ENCODE measurements at regions of chr22 and their contacts with region 1.

Region 1: DNA sequence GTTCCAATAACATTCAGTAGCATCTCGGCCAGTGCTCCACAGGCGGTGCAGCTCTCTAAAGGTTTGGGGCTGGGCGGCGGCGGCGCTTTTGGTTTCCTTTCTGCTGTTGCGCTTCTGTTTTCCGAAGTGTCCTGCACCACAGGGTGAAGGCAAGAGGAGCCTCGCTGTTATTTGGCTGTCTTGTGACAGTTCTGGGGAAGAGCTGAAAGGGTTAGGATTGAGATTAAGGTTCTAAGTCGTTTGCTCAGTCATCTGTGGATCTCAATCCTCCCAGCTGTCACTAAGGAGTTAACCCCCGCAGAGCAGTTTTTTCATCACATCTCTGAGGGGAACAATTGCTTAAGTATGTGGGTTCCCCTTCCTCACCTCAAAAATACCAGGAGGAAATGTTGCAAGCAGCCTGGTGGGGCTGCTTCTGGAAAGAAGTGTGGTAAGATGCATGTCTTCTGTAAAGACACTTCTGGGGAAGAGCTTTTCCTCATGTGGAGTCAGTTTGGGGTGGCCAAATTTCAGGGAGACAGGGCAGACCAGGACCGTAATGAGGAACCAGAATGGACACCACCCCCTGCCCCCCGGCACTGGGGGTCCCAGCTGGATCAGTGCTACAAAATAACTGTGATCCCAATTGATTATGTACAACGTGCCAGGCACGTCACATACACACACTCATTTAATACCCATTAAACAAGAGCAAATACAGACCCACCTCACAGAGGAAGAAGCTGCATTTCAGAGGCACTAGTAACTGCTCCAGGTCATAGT is 14.2 kb downstream of the TMEM121B start:
- DNase-seq: peak in 3 of 10 donors; percentile 43 to 58 (median 47)
- ATAC-seq: peak; percentile 83 to 84
- H3K4me3 Mint-ChIP-seq: peak overlapping the region; percentile 70 to 89 (median 86)
- H3K27ac Mint-ChIP-seq: peak overlapping the region; percentile 81 to 95 (median 92)
- H3K4me1 Mint-ChIP-seq: peaks cover 37 to 77% (median 58%) of the 10 kb centered on the region in 4 donors
- H3K27me3 Mint-ChIP-seq: no peaks in the 10 kb centered on the region

Region 2: GRCh38 chr22:16989915-16990314 is 117.1 kb before region 1 on chr22:
- POLR2A ChIA-PET with region 1: no interaction called
- DNase-seq: no peak
- ATAC-seq: no peak
- H3K4me3 Mint-ChIP-seq: no peak overlapping the region
- H3K27ac Mint-ChIP-seq: no peak overlapping the region
- H3K4me1 Mint-ChIP-seq: peaks cover 0 to 14% (median 1%) of the 10 kb centered on the region in 4 donors
- H3K27me3 Mint-ChIP-seq: peaks cover 3 to 21% (median 9%) of the 10 kb centered on the region in 5 donors

Region 3: GRCh38 chr22:17009640-17010291 is 97.2 kb before region 1 on chr22:
- POLR2A ChIA-PET with region 1: no interaction called
- DNase-seq: no peak
- ATAC-seq: no peak
- H3K4me3 Mint-ChIP-seq: no peak overlapping the region
- H3K27ac Mint-ChIP-seq: no peak overlapping the region
- H3K4me1 Mint-ChIP-seq: no peaks in the 10 kb centered on the region
- H3K27me3 Mint-ChIP-seq: peaks cover 28 to 79% (median 51%) of the 10 kb centered on the region in 5 donors

Region 4: DNA sequence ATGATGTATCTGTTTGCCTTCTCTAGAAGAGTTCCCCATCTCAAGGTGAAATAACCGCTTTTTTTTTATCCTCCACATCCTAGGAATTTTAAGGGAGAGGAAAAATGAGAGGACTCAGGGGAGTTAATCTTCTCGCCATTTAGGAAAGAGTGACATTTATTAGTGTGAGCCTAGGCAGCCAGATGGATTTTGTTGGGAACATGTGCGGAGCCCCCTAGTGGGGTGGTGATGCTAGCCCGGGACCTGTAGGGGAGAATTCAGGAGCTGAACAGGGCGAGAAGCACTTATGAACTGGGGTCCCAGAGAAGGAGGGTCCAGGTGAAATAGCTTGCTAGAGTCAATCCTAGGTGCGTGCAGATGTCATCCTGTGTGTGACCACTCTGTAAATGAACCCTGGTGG is 11.4 kb before region 1 on chr22:
- POLR2A ChIA-PET with region 1: interaction called, 67 read pairs
- DNase-seq: peak in 1 of 10 donors; percentile 23
- ATAC-seq: no peak
- H3K4me3 Mint-ChIP-seq: peak overlapping the region in 4 of 10 donors; percentile 33 to 50 (median 36)
- H3K27ac Mint-ChIP-seq: peak overlapping the region in 6 of 10 donors; percentile 23 to 83 (median 66)
- H3K4me1 Mint-ChIP-seq: peaks cover 46 to 97% (median 92%) of the 10 kb centered on the region in 4 donors
- H3K27me3 Mint-ChIP-seq: no peaks in the 10 kb centered on the region

Region 5: DNA sequence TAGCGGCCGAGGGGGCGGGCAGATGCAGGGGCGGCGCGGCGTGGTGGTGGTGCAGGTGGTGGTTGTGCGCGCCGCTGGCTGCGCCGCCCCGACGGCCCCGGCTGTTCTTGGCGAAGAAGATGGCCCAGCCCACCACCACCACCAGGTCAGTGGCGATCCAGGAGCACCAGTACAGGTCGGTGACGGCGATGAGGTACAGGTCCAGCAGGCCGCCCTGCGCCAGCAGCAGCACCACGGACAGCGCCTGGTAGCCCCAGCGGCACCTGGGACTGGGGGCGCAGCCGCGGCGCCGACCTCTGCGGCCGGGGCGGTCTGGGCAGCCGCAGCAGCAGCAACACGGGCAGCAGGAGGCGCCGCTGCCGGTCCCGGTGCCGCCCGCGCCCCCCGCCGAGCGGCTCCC is 13.3 kb after region 1 on chr22:
- POLR2A ChIA-PET with region 1: interaction called, 34 read pairs
- DNase-seq: peak; percentile 27 to 77 (median 58)
- ATAC-seq: peak; percentile 59 to 76
- H3K4me3 Mint-ChIP-seq: peak overlapping the region in 6 of 10 donors; percentile 25 to 80 (median 47)
- H3K27ac Mint-ChIP-seq: no peak overlapping the region
- H3K4me1 Mint-ChIP-seq: peaks cover 32 to 51% (median 47%) of the 10 kb centered on the region in 4 donors
- H3K27me3 Mint-ChIP-seq: peaks cover 6 to 20% (median 8%) of the 10 kb centered on the region in 5 donors